ENCODE measurements at regions of chr10 and their contacts with region 1.

Region 1: GRCh38 chr10:32958085-32959005 is at the start of gene ITGB1:
- DNase-seq: peak; percentile 100
- ATAC-seq: peak; percentile 77
- H3K4me3 ChIP-seq: peak within 1 kb of the TSS; percentile 75
- H3K27ac ChIP-seq: peak within 1 kb of the TSS; percentile 82
- H3K4me1 ChIP-seq: peaks cover 68% of the 10 kb centered on the region
- H3K27me3 ChIP-seq: no peaks in the 10 kb centered on the region
- CTCF ChIP-seq: no peak
- total RNA-seq, gene ITGB1: 956 and 1,010 TPM in 2 replicates

Region 2: DNA sequence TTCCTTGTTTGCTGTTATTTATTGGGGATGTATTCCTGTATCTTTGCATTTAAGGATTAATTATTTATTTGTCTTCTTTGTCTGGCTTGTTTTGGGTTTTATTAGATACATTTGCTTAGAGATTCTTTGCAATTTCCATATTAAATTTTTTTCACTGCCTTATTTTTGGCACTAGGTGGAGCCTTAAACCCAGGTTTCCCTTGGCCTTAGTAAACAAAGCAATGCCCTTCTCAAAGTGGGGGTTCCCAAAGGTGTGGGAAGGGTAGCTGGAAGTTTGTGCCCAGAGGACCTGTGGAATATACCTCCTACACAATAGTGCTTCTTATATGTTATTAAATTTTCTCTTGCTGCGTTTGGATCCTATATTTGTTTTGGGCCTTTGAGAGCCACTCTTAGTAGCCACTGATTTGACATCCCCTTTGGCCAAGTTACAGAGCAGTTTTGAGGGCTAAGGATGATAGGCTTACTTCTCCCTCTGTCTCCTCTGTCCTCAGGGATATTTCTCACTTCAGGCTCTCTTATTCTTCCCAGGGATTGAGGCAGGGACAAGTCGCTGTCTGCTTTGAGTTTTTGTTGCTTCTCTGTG is 162.7 kb before region 1 on chr10:
- CTCF ChIA-PET with region 1: no interaction called
- POLR2A ChIA-PET with region 1: no interaction called
- intact Hi-C with region 1: loop called (anchors 5 kb)
- DNase-seq: peak; percentile 73
- ATAC-seq: peak; percentile 73
- H3K4me3 ChIP-seq: no peak overlapping the region
- H3K27ac ChIP-seq: no peak overlapping the region
- H3K4me1 ChIP-seq: no peaks in the 10 kb centered on the region
- H3K27me3 ChIP-seq: no peaks in the 10 kb centered on the region
- CTCF ChIP-seq: peak; percentile 99

Region 3: DNA sequence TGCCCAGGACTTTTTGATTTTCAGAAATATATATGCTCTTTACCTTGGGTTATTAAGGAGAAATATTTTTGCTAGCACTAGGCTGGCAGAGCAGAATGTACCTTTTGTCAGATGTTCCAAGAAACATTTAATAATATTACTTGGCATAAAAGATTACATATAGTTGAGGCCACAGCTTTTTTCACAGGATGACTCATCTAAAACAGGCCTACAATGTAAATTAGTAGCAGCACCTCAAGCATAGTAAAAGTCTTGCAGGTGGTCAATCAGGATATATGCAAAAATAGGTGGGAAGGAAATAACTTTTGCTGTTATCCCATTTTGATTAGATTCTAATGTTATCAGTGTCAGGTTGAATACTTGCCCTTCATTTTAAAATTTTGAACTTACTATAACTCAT is 14.6 kb after region 1 on chr10:
- CTCF ChIA-PET with region 1: no interaction called
- POLR2A ChIA-PET with region 1: no interaction called
- intact Hi-C with region 1: loop called (anchors 1 kb)
- DNase-seq: peak; percentile 60
- ATAC-seq: peak; percentile 79
- H3K4me3 ChIP-seq: no peak overlapping the region
- H3K27ac ChIP-seq: no peak overlapping the region
- H3K4me1 ChIP-seq: peaks cover 26% of the 10 kb centered on the region
- H3K27me3 ChIP-seq: no peaks in the 10 kb centered on the region
- CTCF ChIP-seq: no peak

Region 4: DNA sequence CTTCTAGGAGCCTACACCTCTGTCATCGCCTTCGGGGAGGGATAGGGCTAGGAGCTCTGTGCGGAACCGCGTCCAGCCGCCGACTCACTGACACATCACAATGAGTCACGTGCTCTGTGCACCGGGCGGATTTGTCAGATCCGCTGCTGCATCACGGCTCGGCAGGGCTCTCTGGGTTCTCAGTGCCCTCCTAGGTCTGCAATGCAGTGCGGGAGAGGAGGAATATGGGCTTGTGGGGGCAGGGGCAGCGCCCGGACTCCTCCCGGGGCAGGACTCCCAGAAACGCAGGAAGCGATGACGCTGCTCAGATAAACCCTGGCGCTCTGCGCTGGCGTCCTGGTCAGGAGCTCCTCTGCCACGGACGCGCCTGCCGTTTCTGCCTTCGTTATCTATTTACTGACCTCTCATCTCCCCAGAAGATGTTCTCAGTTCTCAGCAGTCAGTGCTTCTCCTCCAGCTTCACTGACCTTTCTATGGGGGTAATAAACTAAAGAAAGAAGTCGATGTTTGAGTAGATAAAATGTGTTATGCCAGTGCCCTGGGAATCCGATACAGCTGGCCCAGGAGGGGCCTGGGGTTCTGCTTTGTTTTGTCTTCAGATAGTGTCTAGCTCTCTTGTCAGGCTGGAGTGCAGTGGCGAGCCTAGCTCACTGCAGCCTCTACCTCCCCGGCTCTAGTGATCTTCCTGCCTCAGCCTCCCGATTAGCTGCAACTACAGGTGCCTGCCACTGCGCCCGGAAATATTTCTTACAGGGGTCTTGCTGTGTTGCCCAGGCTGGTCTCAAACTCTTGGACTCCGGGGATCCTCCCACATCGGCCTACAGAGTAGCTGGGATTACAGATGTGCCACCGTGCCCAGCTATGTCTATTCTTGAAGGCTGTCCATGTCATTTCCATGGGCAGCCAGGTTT is 22.5 kb after region 1 on chr10:
- CTCF ChIA-PET with region 1: interaction called, 11 read pairs
- POLR2A ChIA-PET with region 1: interaction called, 37 read pairs
- intact Hi-C with region 1: loop called (anchors 1 kb)
- DNase-seq: peak; percentile 100
- ATAC-seq: peak; percentile 83
- H3K4me3 ChIP-seq: peak overlapping the region; percentile 61
- H3K27ac ChIP-seq: peak overlapping the region; percentile 94
- H3K4me1 ChIP-seq: peaks cover 63% of the 10 kb centered on the region
- H3K27me3 ChIP-seq: no peaks in the 10 kb centered on the region
- CTCF ChIP-seq: no peak